GM10248 (cell line): ENCODE measurements at regions of chr2 and their contacts with region 1.

Region 1: DNA sequence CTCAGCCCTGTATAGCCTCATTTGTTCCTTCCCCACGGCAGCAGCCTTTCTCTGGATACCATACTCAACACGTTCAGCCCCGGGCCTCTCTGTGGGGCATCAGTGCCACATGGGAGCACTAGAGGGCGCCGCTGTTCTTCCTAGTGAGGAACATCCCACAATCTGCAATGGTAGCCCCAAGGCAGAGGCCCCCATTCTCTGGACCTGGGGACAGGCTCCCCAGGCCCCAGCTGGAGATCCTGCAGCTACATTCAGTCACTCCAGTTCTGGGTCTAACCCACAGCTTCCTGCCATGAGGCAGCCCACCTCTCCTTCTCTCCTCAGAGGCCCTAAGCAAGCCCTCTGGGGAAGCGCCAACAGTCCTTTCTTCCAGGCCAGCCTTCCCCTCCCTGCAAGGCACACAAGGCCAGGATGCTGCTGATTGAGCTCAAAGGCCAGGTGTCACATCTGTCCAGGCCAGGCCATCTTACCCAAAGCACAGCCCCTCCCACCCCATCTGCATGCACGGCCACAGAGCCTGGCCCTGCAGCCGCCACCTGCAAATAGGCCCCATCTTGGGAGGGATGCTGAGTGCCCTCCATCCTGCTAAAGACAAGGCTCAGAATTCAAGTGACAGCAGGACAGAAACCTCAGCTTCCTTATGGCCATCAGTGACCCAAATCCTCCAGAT is 14.3 kb upstream of the SFXN5 start:
- DNase-seq: peak; percentile 85
- CTCF ChIP-seq: peak; percentile 90

Region 2: DNA sequence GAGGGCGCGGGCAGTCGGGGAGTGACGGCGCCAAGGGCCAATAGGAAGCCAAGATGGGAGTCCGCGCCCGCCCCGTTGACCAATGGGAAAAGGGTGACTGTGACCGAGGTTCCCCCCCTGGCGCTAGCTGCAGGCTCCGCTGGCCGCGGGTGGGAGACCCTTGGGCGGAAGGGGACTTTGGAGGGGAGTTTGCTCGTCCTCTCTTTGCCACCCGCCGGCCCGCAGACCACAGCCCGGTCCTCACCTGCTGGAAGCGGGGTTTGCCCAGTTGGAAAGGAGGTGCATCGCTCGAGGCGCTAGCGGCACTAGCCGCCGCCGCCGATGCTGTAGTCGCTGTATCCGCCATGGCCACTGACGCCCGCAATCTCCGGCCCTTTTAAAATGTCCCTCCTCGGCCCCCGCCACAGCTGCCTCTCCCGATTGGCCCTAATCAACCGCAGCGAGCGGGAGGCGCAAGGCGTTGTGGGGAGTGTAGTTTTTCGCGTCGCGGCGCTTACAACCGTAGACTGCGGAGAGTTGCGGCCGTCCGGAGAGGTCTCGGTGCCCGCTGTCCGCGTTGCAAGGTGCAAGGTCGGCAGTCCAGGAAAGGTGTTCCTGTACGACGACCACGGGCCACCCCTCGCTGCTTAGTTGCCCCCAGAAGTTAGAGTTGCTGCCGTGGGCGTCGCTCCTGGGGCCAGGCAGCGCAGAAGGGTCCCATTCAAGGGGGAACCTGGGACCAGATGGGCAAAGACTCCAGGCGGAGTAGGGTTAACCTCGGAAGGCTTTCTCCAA is 14.3 kb before region 1 on chr2 and contains the start of gene SFXN5:
- CTCF ChIA-PET with region 1: interaction called, 25 read pairs
- POLR2A ChIA-PET with region 1: no interaction called
- DNase-seq: peak; percentile 99
- CTCF ChIP-seq: no peak

Region 3: GRCh38 chr2:73095910-73096309 is 10.1 kb after region 1 on chr2:
- CTCF ChIA-PET with region 1: interaction called, 18 read pairs
- POLR2A ChIA-PET with region 1: no interaction called
- DNase-seq: no peak
- CTCF ChIP-seq: no peak

Region 4: GRCh38 chr2:73112913-73113633 is 27.2 kb after region 1 on chr2 and contains the start of gene RAB11FIP5:
- CTCF ChIA-PET with region 1: interaction called, 11 read pairs
- POLR2A ChIA-PET with region 1: no interaction called
- DNase-seq: peak; percentile 77
- CTCF ChIP-seq: no peak

Region 5: GRCh38 chr2:73156539-73157124 is 70.8 kb after region 1 on chr2:
- CTCF ChIA-PET with region 1: interaction called, 50 read pairs
- POLR2A ChIA-PET with region 1: no interaction called
- DNase-seq: peak; percentile 38
- CTCF ChIP-seq: peak; percentile 38

Region 6: DNA sequence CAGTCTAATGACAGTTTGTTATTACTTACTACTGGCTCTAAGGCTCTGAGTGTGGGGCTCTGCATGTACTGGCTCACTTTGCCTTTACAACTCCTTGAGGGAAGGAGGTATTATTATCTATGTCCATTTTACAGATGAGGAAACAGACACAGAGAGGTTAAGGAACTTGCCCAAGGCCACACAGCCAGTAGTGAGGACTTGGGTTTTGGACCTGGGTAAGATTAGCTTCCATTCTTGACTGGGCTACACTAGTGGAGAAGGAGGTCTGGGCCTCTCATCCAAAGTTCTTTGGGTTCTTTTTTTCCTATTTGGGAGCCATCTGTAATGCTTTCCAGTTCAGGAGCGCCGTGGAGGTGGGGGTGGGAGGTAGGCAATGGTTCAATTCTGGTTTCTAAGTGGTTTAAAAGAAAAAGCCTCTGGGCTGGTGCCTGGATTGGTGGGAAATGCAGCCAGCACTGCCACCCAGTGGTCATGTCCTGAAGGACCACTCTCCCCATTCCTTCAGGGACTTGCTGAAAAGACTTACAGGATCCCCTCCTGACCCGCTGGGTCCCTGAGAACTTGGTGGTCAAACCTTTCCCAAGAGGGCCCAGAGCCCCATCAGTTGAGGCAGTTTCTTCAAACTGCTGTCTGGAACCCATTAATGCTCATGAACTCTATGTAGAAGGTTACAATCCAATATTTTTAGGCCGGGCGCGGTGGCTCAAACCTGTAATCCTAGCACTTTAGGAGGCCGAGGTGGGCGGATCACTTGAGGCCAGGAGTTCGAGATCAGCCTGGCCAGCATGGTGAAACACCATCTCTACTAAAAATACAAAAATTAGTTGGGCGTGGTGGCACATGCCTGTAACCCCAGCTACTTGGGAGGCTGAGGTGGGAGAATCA is 77.9 kb after region 1 on chr2:
- CTCF ChIA-PET with region 1: interaction called, 50 read pairs
- POLR2A ChIA-PET with region 1: no interaction called
- DNase-seq: peak; percentile 81
- CTCF ChIP-seq: peak; percentile 88

Region 7: GRCh38 chr2:73212448-73213176 is 126.8 kb after region 1 on chr2:
- CTCF ChIA-PET with region 1: interaction called, 89 read pairs
- POLR2A ChIA-PET with region 1: no interaction called
- DNase-seq: peak; percentile 85
- CTCF ChIP-seq: peak; percentile 94

Region 8: DNA sequence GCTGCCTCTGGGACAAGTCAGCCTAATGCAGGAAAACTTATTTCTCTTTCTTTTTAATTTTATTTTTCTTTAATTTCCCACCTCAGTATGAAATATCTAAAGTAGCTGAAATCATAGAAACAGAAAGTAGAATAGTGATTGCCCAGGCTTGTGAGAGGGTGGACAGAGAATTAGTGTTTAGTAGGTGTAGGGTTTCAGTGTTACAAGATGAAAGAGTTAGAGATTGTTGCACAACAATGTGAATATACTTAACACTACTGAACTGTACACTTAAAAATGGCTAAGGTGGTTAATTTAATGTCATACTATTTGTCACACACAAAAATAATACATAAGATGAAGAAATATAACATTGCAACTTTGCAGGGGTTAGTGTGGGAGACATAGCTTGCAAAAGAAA is 475.6 kb after region 1 on chr2:
- CTCF ChIA-PET with region 1: no interaction called
- POLR2A ChIA-PET with region 1: no interaction called
- DNase-seq: no peak
- CTCF ChIP-seq: no peak